Common myeloid progenitor, CD34-positive (primary cell): ENCODE measurements at regions of chr10 and their contacts with region 1.

Region 1: GRCh38 chr10:45235798-45236231 is 79.6 kb downstream of the OR13A1 start:
- DNase-seq: no peak
- H3K4me3 ChIP-seq: no peak overlapping the region
- H3K27ac ChIP-seq: no peak overlapping the region
- H3K4me1 ChIP-seq: peaks cover 0 to 7% (median 2%) of the 10 kb centered on the region in 4 experiments
- H3K27me3 ChIP-seq: no peaks in the 10 kb centered on the region

Region 2: DNA sequence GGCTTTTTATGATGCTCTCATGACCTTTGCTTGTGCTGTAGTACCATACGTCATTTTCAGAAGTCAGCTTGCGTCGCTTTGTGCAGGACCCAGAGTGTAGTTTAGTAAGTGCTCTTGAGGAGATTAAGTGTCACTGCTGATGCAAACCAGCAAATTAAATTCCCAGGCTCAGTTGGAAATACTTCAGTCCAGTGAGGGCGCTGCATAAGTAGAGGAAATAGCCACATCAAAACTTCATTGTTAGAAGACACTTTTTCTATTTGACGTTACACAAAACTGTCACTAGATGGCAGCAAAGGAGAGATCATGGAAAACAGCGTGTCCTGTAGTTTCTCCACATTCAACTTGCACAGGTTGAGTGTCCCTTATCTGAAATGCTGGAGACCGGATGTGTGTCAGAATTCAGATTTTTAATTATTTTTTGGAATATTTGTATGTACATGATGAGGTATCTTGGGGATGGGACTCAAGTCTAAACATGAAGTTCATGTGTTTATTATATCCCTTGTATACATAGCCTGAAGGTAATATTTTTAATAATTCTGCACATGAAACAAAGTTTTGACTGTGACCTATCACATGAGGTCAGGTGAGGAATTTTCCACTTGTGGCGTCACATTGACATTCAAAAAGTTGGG is 227.2 kb before region 1 on chr10:
- CTCF ChIA-PET with region 1: interaction called, 11 read pairs
- POLR2A ChIA-PET with region 1: no interaction called
- DNase-seq: peak; percentile 87 to 94 (median 93)
- H3K4me3 ChIP-seq: no peak overlapping the region
- H3K27ac ChIP-seq: no peak overlapping the region
- H3K4me1 ChIP-seq: peaks cover 0 to 13% (median 2%) of the 10 kb centered on the region in 4 experiments
- H3K27me3 ChIP-seq: no peaks in the 10 kb centered on the region

Region 3: DNA sequence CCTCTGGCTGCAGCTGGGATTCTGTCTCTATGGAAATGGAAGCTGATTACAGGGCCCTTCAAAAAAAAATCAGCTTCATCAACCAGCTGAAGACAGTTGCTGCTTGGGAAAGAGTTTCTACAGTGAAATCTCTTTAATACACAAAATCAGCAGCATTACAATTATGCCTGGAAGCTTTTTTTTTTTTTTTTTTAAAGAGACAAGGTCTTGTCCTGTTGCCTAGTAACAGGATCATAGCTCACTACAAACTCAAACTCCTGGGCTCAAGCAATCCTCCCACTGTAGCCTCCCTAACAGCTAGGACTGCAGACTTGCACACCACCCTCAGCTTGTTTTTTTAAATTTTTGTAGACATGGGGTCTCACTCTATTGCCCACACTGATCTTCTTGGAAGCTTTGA is 14.9 kb before region 1 on chr10:
- CTCF ChIA-PET with region 1: interaction called, 18 read pairs
- POLR2A ChIA-PET with region 1: no interaction called
- DNase-seq: no peak
- H3K4me3 ChIP-seq: no peak overlapping the region
- H3K27ac ChIP-seq: no peak overlapping the region
- H3K4me1 ChIP-seq: no peaks in the 10 kb centered on the region
- H3K27me3 ChIP-seq: peaks cover 0 to 3% (median 0%) of the 10 kb centered on the region in 5 experiments